ENCODE measurements at regions of chr2 and their contacts with region 1.

Region 1: DNA sequence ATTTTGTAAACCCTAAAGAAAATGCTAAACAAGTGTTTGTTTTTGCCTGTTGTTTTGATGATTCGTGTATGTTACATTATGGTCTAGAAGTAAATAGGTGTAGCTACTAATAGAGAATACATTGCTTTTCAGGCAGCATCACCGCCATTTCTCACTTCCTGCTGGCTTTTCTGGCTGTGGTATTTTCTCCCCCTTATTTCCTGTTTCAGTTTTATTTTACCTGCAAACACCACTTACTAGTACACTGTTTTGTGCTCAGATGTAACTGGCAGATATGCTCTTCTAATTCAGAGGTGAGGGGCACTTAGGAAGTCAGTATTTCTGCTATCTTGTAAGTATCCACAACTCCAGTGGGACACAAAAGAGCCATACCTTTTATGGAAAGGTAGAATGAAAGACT is 38.1 kb upstream of the SLC3A1 start:
- DNase-seq: peak; percentile 34
- H3K4me3 Mint-ChIP-seq: no peak overlapping the region
- H3K27ac Mint-ChIP-seq: peak overlapping the region; percentile 36
- H3K4me1 Mint-ChIP-seq: peaks cover 26% of the 10 kb centered on the region
- H3K27me3 Mint-ChIP-seq: no peaks in the 10 kb centered on the region

Region 2: DNA sequence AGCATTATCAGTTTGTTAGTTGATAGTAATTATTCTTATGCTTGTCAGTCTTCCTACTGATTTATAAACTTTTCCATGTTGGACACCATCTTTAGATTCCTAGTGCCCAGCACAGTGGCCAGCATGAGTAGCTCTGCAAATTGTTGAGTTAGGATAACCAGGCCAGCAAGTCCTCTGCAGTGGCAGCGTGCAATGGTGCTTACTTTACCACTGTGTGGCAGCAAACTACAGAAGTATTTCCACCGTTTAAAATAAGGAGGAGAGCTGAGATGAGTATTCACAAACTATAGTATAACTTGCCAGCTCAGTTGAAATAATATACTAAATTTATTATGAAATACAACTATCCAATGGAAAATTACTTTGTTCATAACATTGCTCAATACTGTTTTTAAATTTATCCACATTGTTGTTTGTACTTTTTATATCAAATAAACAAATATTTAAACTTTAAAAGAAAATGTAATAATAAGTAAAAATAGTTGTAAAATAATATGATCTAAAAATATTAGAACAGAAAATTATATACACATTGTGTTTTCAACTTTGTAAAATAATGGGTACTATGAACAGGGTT is 632.1 kb before region 1 on chr2:
- CTCF ChIA-PET with region 1: no interaction called
- POLR2A ChIA-PET with region 1: no interaction called
- intact Hi-C with region 1: no loop called
- DNase-seq: peak; percentile 48
- H3K4me3 Mint-ChIP-seq: no peak overlapping the region
- H3K27ac Mint-ChIP-seq: no peak overlapping the region
- H3K4me1 Mint-ChIP-seq: peaks cover 8% of the 10 kb centered on the region
- H3K27me3 Mint-ChIP-seq: no peaks in the 10 kb centered on the region

Region 3: DNA sequence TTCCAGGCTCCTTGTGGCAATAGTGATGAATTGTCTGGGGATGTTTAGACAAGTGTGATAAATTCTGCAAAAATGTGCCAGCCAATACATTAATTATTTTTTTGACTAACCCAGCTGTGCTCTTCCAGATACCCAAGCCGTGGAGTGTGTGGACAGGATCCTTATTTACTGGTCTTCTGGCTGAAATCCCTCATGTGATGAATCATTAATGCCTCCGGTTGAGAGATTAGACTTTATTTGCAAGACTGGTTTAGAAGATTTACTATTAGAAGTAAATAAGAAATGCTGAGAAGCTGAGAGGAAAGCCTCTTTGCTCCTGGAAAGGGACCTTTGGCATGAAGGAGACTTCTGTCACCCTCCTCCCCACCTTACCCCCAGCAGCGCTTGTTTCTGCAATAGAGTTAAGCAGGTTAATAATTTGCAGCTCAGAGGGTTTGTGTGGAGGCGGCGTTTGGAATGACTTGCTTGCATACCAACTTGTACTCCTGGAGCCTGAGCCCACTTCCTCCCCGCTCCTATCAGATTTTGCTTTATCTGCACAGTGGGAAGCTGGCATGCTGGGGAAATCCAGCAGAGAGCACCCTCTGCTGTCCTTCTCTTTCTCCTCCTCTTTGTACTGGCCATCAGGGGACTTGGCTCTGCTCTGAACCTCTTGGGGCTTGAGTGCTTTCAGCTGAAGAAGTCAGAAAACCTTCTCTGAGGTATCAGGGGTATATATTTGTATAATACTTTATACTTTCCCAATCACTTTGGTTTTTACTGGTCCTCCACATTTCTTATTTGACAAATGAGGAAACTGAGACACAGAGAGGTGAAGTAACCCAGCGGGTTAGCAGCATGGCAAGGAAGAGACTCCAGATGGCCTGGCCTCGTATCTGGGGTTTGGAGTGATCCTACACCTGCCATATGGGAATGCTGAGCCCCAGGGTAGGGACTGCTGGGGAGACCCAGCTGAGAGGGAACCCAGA is 54.3 kb after region 1 on chr2:
- CTCF ChIA-PET with region 1: interaction called, 3 read pairs
- POLR2A ChIA-PET with region 1: interaction called, 4 read pairs
- intact Hi-C with region 1: loop called (anchors 5 kb)
- DNase-seq: no peak
- H3K4me3 Mint-ChIP-seq: no peak overlapping the region
- H3K27ac Mint-ChIP-seq: no peak overlapping the region
- H3K4me1 Mint-ChIP-seq: peaks cover 9% of the 10 kb centered on the region
- H3K27me3 Mint-ChIP-seq: peaks cover 5% of the 10 kb centered on the region

Region 4: DNA sequence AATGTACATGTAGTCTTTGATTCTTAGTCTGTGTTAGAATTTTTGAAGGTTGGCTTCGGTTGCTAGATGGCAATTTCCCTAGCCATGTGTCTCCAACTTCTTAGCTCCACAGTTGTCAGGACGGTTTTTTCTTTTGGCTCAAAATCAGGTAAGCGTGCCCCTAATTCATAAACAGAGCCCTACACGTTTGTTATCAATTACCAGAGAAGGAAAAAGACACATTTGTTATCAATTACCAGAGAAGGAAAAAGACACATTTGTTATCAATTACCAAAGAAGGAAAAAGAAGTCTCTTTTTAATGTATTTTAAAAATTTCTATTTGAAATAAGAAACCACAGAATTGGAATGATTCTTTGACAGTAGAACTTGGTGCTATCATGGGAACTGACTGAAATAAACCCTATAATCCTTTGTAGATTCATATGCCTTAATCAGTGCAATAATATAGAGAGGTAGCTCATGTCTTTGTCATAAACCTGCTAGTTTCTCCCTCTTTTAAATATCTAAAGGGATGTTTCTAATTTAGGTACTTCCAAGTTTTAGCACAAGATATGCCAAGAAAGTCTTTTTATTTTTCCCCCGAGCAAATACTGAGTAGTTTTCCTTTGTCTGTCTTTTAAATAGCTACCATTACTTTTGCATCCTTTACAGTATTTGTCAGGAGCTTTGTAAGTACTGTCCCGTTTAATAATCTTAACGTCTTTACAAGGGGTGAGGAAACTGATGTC is 160.4 kb after region 1 on chr2:
- CTCF ChIA-PET with region 1: no interaction called
- POLR2A ChIA-PET with region 1: no interaction called
- intact Hi-C with region 1: no loop called
- DNase-seq: no peak
- H3K4me3 Mint-ChIP-seq: no peak overlapping the region
- H3K27ac Mint-ChIP-seq: no peak overlapping the region
- H3K4me1 Mint-ChIP-seq: no peaks in the 10 kb centered on the region
- H3K27me3 Mint-ChIP-seq: no peaks in the 10 kb centered on the region